CD4-positive, alpha-beta T cell (primary cell): ENCODE measurements at regions of chr17 and their contacts with region 1.

Region 1: DNA sequence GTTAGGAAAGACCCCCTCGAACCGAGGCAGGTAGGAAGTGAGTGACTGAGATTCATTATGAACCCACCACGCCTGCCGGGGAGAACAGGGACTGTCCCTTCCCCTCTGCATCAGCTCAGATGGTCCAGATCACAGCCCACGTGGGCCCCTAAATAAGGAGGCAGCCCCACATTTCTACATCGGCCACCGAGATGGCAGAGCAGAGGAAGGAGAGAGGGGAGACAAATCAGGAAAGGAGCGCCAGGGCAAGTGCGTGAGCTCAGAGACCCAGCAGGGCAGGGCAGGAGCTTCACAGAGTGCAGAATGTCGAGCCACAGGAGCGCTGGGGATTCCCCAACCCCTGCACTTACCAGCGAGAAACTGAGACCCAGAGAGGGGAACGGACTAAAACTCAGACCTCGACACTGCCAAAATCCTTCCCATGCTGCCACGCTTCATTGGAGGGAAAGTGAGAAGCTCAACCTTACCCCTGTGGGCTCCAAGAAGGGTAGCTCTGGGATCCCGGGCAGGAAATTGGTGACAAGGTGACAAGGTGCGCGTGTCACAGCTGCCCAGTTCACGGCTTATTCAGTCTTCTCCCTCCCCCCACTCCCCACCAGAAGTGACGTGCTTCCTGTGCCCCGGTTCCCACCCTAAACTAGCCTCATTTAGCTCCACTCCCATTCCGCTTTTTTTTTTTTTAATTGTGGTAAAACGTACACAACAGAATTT is at the start of gene ICAM2:
- DNase-seq: peak; percentile 82 to 99 (median 86)
- ATAC-seq: peak; percentile 69
- H3K4me3 ChIP-seq: peak within 1 kb of the TSS; percentile 97
- H3K4me3 Mint-ChIP-seq: peak within 1 kb of the TSS; percentile 99
- H3K27ac ChIP-seq: peak within 1 kb of the TSS; percentile 98 to 99
- H3K27ac Mint-ChIP-seq: peak within 1 kb of the TSS; percentile 100
- H3K4me1 ChIP-seq: peaks cover 70% of the 10 kb centered on the region
- H3K4me1 Mint-ChIP-seq: peaks cover 82% of the 10 kb centered on the region
- H3K27me3 ChIP-seq: no peaks in the 10 kb centered on the region
- H3K27me3 Mint-ChIP-seq: no peaks in the 10 kb centered on the region
- CTCF ChIP-seq: no peak
- total RNA-seq, gene ICAM2: 50.6 to 54.7 TPM

Region 2: GRCh38 chr17:63931099-63931561 is 89.1 kb before region 1 on chr17:
- CTCF ChIA-PET with region 1: interaction called, 7 read pairs
- POLR2A ChIA-PET with region 1: interaction called, 16 read pairs
- intact Hi-C with region 1: no loop called
- DNase-seq: peak; percentile 24 to 85 (median 60)
- ATAC-seq: peak; percentile 78
- H3K4me3 ChIP-seq: peak overlapping the region; percentile 69
- H3K4me3 Mint-ChIP-seq: peak overlapping the region; percentile 92
- H3K27ac ChIP-seq: peak overlapping the region; percentile 60 to 63
- H3K27ac Mint-ChIP-seq: peak overlapping the region; percentile 92
- H3K4me1 ChIP-seq: peaks cover 33% of the 10 kb centered on the region
- H3K4me1 Mint-ChIP-seq: peaks cover 26% of the 10 kb centered on the region
- H3K27me3 ChIP-seq: no peaks in the 10 kb centered on the region
- H3K27me3 Mint-ChIP-seq: no peaks in the 10 kb centered on the region
- CTCF ChIP-seq: no peak

Region 3: GRCh38 chr17:63984651-63985386 is 35.4 kb before region 1 on chr17:
- CTCF ChIA-PET with region 1: interaction called, 30 read pairs
- POLR2A ChIA-PET with region 1: interaction called, 14 read pairs
- intact Hi-C with region 1: no loop called
- DNase-seq: peak in 11 of 14 experiments; percentile 24 to 83 (median 49)
- ATAC-seq: peak; percentile 93
- H3K4me3 ChIP-seq: no peak overlapping the region
- H3K4me3 Mint-ChIP-seq: peak overlapping the region; percentile 63
- H3K27ac ChIP-seq: peak overlapping the region in 1 of 2 donors; percentile 0
- H3K27ac Mint-ChIP-seq: peak overlapping the region; percentile 77
- H3K4me1 ChIP-seq: peaks cover 26% of the 10 kb centered on the region
- H3K4me1 Mint-ChIP-seq: peaks cover 26% of the 10 kb centered on the region
- H3K27me3 ChIP-seq: no peaks in the 10 kb centered on the region
- H3K27me3 Mint-ChIP-seq: no peaks in the 10 kb centered on the region
- CTCF ChIP-seq: no peak

Region 4: GRCh38 chr17:64005734-64006167 is 14.5 kb before region 1 on chr17:
- CTCF ChIA-PET with region 1: interaction called, 111 read pairs
- POLR2A ChIA-PET with region 1: interaction called, 156 read pairs
- intact Hi-C with region 1: no loop called
- DNase-seq: no peak
- ATAC-seq: no peak
- H3K4me3 ChIP-seq: no peak overlapping the region
- H3K4me3 Mint-ChIP-seq: no peak overlapping the region
- H3K27ac ChIP-seq: peak overlapping the region in 1 of 2 donors; percentile 64
- H3K27ac Mint-ChIP-seq: peak overlapping the region; percentile 75
- H3K4me1 ChIP-seq: peaks cover 51% of the 10 kb centered on the region
- H3K4me1 Mint-ChIP-seq: peaks cover 47% of the 10 kb centered on the region
- H3K27me3 ChIP-seq: no peaks in the 10 kb centered on the region
- H3K27me3 Mint-ChIP-seq: no peaks in the 10 kb centered on the region
- CTCF ChIP-seq: no peak

Region 5: GRCh38 chr17:64051153-64051552 is 30.9 kb after region 1 on chr17:
- CTCF ChIA-PET with region 1: interaction called, 3 read pairs
- POLR2A ChIA-PET with region 1: interaction called, 49 read pairs
- intact Hi-C with region 1: loop called in 1 of 2 experiments (anchors 2 kb)
- DNase-seq: peak in 5 of 14 experiments; percentile 16 to 88 (median 69)
- ATAC-seq: peak; percentile 100
- H3K4me3 ChIP-seq: no peak overlapping the region
- H3K4me3 Mint-ChIP-seq: peak overlapping the region; percentile 17
- H3K27ac ChIP-seq: peak overlapping the region in 1 of 2 donors; percentile 78
- H3K27ac Mint-ChIP-seq: peak overlapping the region; percentile 85
- H3K4me1 ChIP-seq: peaks cover 59% of the 10 kb centered on the region
- H3K4me1 Mint-ChIP-seq: peaks cover 57% of the 10 kb centered on the region
- H3K27me3 ChIP-seq: no peaks in the 10 kb centered on the region
- H3K27me3 Mint-ChIP-seq: no peaks in the 10 kb centered on the region
- CTCF ChIP-seq: no peak

Region 6: GRCh38 chr17:64103391-64104364 is 83.5 kb after region 1 on chr17:
- CTCF ChIA-PET with region 1: no interaction called
- POLR2A ChIA-PET with region 1: interaction called, 12 read pairs
- intact Hi-C with region 1: no loop called
- DNase-seq: peak in 1 of 14 experiments; percentile 37
- ATAC-seq: no peak
- H3K4me3 ChIP-seq: no peak overlapping the region
- H3K4me3 Mint-ChIP-seq: peak overlapping the region; percentile 30
- H3K27ac ChIP-seq: no peak overlapping the region
- H3K27ac Mint-ChIP-seq: no peak overlapping the region
- H3K4me1 ChIP-seq: peaks cover 60% of the 10 kb centered on the region
- H3K4me1 Mint-ChIP-seq: peaks cover 72% of the 10 kb centered on the region
- H3K27me3 ChIP-seq: no peaks in the 10 kb centered on the region
- H3K27me3 Mint-ChIP-seq: no peaks in the 10 kb centered on the region
- CTCF ChIP-seq: no peak

Region 7: DNA sequence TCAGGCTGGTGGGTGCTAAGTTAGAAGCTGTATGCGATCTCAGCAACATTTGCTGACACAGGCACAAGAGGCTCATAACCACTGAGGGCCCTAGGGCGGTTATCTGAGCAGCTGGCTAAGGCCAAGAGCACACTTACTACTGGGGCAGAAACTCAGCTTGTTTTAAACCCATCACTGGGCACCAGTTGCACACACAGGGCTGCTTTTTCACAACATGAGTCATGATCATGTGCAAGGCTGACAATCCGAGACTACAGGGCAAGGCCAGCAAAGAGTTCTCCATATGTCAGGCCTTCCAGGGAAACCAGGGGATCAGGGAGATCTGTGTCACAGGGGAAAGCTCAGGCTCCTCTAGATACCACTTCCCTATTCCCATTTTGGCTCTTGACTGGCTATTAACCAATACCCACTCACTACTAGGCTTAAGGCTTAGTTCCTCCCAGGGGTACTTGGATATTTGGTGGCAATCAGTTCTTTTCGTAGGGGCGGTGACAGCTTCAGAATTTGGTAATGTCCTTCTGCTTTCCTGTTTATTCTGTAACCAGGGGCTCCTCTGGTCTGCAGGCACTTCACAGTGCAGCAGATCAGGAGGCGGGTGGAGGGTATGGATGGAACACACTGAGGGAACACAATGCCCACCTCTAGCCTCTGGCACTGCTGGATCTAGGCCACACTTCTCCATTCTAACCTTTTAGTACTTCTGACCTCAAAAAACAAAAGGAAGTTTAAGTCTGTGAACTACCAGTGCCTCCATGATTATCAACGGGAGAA is 154.7 kb after region 1 on chr17:
- CTCF ChIA-PET with region 1: no interaction called
- POLR2A ChIA-PET with region 1: no interaction called
- intact Hi-C with region 1: no loop called
- DNase-seq: peak in 3 of 14 experiments; percentile 12 to 77 (median 68)
- ATAC-seq: no peak
- H3K4me3 ChIP-seq: no peak overlapping the region
- H3K4me3 Mint-ChIP-seq: no peak overlapping the region
- H3K27ac ChIP-seq: no peak overlapping the region
- H3K27ac Mint-ChIP-seq: no peak overlapping the region
- H3K4me1 ChIP-seq: peaks cover 2% of the 10 kb centered on the region
- H3K4me1 Mint-ChIP-seq: no peaks in the 10 kb centered on the region
- H3K27me3 ChIP-seq: no peaks in the 10 kb centered on the region
- H3K27me3 Mint-ChIP-seq: no peaks in the 10 kb centered on the region
- CTCF ChIP-seq: no peak

Region 8: DNA sequence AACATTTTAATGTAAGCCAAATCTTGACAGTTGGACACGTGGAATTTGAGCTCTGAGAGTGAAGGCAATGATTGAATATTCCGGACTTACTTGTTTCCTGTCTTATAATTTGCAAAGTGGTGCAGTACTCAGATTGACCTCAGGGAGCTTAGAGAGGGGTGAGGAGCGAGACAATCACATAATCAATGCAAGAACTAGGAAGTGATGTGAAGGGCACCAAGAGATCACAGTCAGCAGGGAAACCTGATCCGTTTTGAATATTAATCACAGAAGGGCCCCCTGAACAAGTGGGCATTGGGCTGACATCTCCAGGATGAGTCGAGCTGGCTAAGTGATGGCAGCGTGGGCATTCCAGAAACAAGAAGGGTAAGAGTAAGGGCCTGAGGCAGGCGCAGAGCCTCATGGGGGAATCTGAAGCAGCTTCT is 216.7 kb after region 1 on chr17:
- CTCF ChIA-PET with region 1: no interaction called
- POLR2A ChIA-PET with region 1: no interaction called
- intact Hi-C with region 1: no loop called
- DNase-seq: peak in 1 of 14 experiments; percentile 8
- ATAC-seq: peak; percentile 66
- H3K4me3 ChIP-seq: no peak overlapping the region
- H3K4me3 Mint-ChIP-seq: no peak overlapping the region
- H3K27ac ChIP-seq: no peak overlapping the region
- H3K27ac Mint-ChIP-seq: no peak overlapping the region
- H3K4me1 ChIP-seq: peaks cover 5% of the 10 kb centered on the region
- H3K4me1 Mint-ChIP-seq: peaks cover 19% of the 10 kb centered on the region
- H3K27me3 ChIP-seq: no peaks in the 10 kb centered on the region
- H3K27me3 Mint-ChIP-seq: no peaks in the 10 kb centered on the region
- CTCF ChIP-seq: no peak

Region 9: GRCh38 chr17:64262417-64263260 is 242.4 kb after region 1 on chr17 and contains the start of gene TEX2:
- CTCF ChIA-PET with region 1: no interaction called
- POLR2A ChIA-PET with region 1: interaction called, 3 read pairs
- intact Hi-C with region 1: loop called in 1 of 2 experiments (anchors 2 kb)
- DNase-seq: peak; percentile 39 to 87 (median 60)
- ATAC-seq: peak; percentile 47
- H3K4me3 ChIP-seq: peak within 1 kb of the TSS; percentile 70
- H3K4me3 Mint-ChIP-seq: peak within 1 kb of the TSS; percentile 92
- H3K27ac ChIP-seq: peak within 1 kb of the TSS; percentile 70 to 86
- H3K27ac Mint-ChIP-seq: peak within 1 kb of the TSS; percentile 95
- H3K4me1 ChIP-seq: peaks cover 28% of the 10 kb centered on the region
- H3K4me1 Mint-ChIP-seq: peaks cover 46% of the 10 kb centered on the region
- H3K27me3 ChIP-seq: no peaks in the 10 kb centered on the region
- H3K27me3 Mint-ChIP-seq: peaks cover 6% of the 10 kb centered on the region
- CTCF ChIP-seq: no peak
- total RNA-seq, gene TEX2: 8.6 to 8.9 TPM